Activated T-helper 2 cell treated with anti-CD3 and anti-CD28 coated beads, Interferon-gamma antibody, Interleukin-2, Interleukin-4, amounts not matched to agents 10 μg/mL and 5 μg/mL and 100 μg/mL, durations not matched to agents 14 hours and 24 hours and 36 hours (primary cell): ENCODE measurements at regions of chr10 and their contacts with region 1.

Region 1: DNA sequence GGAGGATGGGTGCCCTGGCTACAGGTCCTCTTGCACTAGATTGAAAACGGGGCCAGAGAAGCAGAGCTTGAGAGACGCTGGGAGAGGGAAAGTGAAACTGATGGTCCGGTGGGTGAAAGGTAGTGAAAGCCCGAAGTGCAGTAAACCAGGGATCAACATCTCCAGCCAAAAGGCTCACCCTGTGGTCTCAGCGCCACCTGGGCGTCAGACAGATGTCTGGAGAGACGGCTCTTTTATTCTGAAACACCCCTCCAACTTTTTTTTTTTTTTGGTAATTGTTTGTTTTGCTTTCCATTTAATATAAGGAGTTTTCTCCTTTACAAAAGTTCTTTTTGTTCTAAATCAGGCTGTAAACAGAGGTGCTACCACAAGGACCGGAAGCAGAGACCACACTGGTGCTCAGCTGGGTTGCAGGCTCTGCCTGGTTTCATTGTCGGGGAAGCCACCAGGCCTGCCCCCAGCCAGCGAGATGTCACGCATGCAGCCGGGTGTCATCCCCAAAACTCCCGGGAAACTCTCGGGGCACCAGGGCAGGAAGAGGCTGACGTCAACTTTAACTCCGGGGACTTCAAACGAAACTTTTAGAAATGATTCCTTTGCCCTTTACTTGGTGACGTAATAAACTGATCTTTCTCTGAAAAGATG is 11.2 kb downstream of the IL2RA start:
- DNase-seq: peak; percentile 90
- H3K4me3 Mint-ChIP-seq: peak overlapping the region; percentile 85
- H3K27ac Mint-ChIP-seq: peak overlapping the region; percentile 91
- H3K4me1 Mint-ChIP-seq: peaks cover 83% of the 10 kb centered on the region
- H3K27me3 Mint-ChIP-seq: no peaks in the 10 kb centered on the region

Region 2: DNA sequence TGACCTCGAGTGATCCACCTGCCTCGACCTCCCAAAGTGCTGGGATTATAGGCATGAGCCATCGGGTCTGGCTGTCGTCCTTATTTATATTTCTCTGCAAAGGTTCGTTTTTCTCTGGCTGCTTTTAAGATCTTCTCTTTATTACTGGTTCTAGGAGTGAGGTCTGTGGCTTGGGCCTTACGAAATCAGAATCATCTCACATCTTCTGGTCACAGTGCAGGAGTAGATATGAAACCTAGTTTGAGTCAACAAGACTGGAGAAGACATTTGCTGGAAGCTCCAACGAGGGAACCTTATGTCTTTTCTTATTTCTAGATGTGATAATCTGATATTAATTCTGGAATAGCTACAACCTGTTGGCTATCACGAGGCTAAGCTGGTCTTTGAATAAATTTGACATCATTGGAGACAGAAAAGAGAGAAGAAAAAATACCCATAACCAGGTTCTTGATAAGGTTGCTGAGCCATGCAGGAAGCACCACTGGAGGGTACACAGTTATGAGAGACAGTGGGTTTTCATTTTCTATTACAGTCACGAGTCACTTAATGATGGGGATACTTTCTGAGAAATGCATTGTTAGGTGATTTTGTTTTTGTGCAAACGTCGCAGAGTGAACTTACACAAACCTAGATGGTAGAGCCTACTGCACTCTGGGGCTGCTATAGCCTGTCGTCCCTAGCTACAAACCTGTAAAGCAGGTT is 48.0 kb before region 1 on chr10:
- intact Hi-C with region 1: loop called (anchors 2 kb)
- DNase-seq: no peak
- H3K4me3 Mint-ChIP-seq: peak overlapping the region; percentile 28
- H3K27ac Mint-ChIP-seq: peak overlapping the region; percentile 85
- H3K4me1 Mint-ChIP-seq: peaks cover 48% of the 10 kb centered on the region
- H3K27me3 Mint-ChIP-seq: peaks cover 6% of the 10 kb centered on the region

Region 3: DNA sequence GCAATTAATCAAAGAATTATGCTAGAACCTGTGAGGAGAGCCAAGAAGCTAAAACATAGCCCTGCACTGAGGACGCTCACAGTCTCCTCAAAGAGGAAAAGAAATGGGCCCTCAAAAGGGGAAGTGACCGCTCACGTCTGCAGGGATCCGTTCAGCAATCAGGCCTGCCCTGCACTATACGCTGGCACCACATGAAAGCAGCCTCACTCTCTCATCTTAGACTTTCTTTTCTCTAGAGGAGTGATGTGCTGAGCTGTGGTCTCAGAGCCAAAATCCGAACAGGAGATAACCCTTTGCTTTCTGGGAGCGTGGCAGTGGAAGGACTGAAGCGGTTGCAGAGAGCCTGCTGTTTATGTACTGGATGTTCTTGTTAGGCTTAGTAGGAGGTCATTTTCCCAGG is 17.5 kb after region 1 on chr10:
- intact Hi-C with region 1: loop called (anchors 1 kb)
- DNase-seq: peak; percentile 45
- H3K4me3 Mint-ChIP-seq: peak overlapping the region; percentile 85
- H3K27ac Mint-ChIP-seq: peak overlapping the region; percentile 99
- H3K4me1 Mint-ChIP-seq: peaks cover 91% of the 10 kb centered on the region
- H3K27me3 Mint-ChIP-seq: no peaks in the 10 kb centered on the region

Region 4: DNA sequence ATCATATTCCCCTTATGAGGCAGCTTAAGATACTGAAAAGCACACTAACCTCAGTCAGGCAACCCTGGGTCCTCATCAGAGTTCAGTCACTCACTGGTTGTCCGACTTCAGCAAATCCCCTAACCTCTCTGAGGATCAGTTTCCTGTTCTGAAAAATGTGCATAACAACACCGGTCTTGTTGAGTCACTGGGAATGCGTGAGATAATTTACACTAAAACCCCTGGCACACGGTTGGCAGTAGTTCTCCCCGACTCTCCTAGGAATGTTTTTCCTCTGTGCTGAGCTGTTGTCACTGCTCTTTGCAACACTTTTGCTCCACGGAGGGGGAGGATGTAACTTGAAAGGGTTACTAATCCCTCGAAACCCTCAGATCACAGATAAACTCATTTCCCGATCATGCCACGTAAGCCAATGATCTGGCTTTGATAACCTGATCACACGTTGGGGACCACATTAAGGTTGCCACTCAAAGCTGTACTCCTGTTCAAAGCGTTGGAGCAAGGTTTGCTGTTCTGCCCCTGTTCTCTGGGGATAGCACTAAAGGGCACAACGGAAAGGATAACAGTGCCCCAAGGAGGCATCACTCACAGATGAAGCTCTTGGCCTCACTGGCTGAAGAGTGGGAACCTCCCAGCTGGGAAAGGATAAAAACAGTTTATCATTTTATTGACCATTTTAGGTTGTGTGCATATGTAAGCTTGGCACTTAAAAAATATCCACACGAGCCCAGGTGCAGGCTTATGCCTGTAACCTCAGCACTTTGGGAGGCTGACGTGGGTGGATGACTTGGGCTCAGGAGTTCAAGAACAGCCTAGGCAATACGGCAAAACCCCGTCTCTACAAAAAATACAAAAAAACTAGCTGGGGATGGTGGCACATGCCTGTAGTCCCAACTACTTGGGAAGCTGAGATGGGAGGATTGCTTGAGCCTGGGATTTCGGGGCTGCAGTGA is 32.9 kb after region 1 on chr10:
- intact Hi-C with region 1: loop called (anchors 1 kb)
- DNase-seq: peak; percentile 67
- H3K4me3 Mint-ChIP-seq: peak overlapping the region; percentile 82
- H3K27ac Mint-ChIP-seq: peak overlapping the region; percentile 92
- H3K4me1 Mint-ChIP-seq: peaks cover 73% of the 10 kb centered on the region
- H3K27me3 Mint-ChIP-seq: no peaks in the 10 kb centered on the region